T-cell (primary cell): ENCODE measurements at regions of chrX and their contacts with region 1.

Region 1: GRCh38 chrX:101091817-101092216 is 6.2 kb upstream of the CENPI start:
- DNase-seq: no peak
- ATAC-seq: no peak
- H3K4me3 ChIP-seq: no peak overlapping the region
- H3K4me3 Mint-ChIP-seq: no peak overlapping the region
- H3K27ac ChIP-seq: no peak overlapping the region
- H3K27ac Mint-ChIP-seq: no peak overlapping the region
- H3K4me1 ChIP-seq: no peaks in the 10 kb centered on the region
- H3K4me1 Mint-ChIP-seq: no peaks in the 10 kb centered on the region
- H3K27me3 ChIP-seq: no peaks in the 10 kb centered on the region
- H3K27me3 Mint-ChIP-seq: peaks cover 0 to 2% of the 10 kb centered on the region in 2 donors

Region 2: DNA sequence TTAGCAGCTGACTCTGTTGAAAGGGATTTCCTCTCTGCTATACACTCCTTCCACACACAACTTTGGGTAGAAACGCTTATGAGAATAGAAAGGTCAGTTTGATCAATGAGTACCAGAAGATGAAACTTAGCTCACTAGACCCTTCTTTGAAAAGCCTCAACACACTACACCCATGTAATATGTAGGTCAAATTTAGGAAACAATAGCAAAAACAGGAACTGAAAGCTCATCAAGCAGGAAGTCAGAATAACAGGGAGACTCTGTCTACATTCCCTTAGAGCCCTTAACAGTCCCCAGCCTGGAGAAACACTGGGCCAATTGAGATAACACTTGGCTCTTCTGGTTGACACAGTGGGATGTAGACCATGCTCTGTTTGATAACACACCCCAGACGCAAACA is 417.1 kb before region 1 on chrX:
- CTCF ChIA-PET with region 1: interaction called in 1 of 2 experiments, 10 read pairs
- POLR2A ChIA-PET with region 1: no interaction called
- DNase-seq: no peak
- ATAC-seq: peak in 1 of 4 experiments; percentile 12
- H3K4me3 ChIP-seq: no peak overlapping the region
- H3K4me3 Mint-ChIP-seq: no peak overlapping the region
- H3K27ac ChIP-seq: no peak overlapping the region
- H3K27ac Mint-ChIP-seq: no peak overlapping the region
- H3K4me1 ChIP-seq: no peaks in the 10 kb centered on the region
- H3K4me1 Mint-ChIP-seq: peaks cover 0 to 19% (median 12%) of the 10 kb centered on the region in 3 donors
- H3K27me3 ChIP-seq: no peaks in the 10 kb centered on the region
- H3K27me3 Mint-ChIP-seq: peaks cover 0 to 25% of the 10 kb centered on the region in 2 donors

Region 3: DNA sequence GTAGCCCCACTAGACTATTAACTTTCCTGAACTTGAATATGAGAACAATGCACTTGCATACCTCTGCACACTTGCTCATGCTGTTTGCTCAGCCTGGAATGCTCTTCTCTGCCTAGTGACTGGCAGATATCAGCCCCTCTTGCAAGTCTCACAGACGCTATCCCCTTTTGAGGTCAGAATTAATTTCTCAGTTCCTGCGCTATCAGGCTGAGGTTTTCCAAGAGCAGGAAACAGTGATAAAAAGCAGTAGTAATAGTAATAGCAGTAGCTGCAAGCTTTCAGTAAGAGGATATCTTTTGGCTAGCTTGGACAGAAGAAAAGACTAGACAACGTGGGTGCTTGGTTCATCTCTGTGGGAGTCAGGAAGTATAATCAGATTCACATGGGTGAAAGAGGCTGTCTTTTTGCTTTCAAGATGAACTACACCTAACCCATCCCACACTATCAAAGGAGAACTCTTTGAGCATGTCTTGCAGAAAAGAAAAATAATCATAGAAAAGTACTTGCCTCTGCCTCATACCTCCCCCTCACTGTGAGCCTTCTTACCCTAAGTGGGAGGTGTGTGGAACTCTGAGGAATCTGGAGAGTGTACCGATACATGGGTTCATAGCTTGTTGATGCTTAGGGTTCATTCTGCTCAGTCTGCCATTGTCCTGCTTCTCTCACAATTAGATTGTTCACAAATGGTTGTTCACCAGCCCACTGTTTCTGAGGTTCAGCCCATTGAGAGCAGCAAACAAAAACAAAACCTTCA is 116.5 kb after region 1 on chrX:
- CTCF ChIA-PET with region 1: interaction called in 1 of 2 experiments, 10 read pairs
- POLR2A ChIA-PET with region 1: interaction called in 1 of 2 experiments, 4 read pairs
- DNase-seq: no peak
- ATAC-seq: peak in 3 of 4 experiments; percentile 34 to 47 (median 40)
- H3K4me3 ChIP-seq: no peak overlapping the region
- H3K4me3 Mint-ChIP-seq: peak overlapping the region in 1 of 3 donors; percentile 23
- H3K27ac ChIP-seq: no peak overlapping the region
- H3K27ac Mint-ChIP-seq: peak overlapping the region; percentile 37 to 59
- H3K4me1 ChIP-seq: peaks cover 0 to 2% of the 10 kb centered on the region in 2 experiments
- H3K4me1 Mint-ChIP-seq: peaks cover 11 to 16% (median 13%) of the 10 kb centered on the region in 3 donors
- H3K27me3 ChIP-seq: no peaks in the 10 kb centered on the region
- H3K27me3 Mint-ChIP-seq: no peaks in the 10 kb centered on the region